HCT116 (cell line): ENCODE measurements at regions of chr12 and their contacts with region 1.

Region 1: DNA sequence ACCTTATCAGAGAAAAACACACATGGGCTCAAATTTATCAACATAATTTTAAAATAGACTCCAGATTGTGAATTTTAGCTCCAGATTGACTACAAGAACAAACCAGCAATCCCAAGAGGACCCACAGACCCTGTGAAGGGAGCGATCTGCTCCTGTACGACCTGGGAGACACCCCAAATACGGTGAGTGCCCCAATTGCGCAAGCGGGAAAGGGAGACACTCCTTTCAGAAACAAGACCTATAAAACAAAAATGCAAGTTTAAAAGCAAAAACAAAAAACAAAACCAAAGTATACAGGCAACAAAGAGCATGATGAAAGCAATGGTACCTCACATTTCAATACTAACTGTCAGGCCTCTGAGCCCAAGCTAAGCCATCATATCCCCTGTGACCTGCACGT is 32.1 kb downstream of the DNAI7 start:
- DNase-seq: no peak
- ATAC-seq: no peak
- H3K4me3 ChIP-seq: no peak overlapping the region
- H3K27ac ChIP-seq: no peak overlapping the region
- H3K4me1 ChIP-seq: no peaks in the 10 kb centered on the region
- H3K27me3 ChIP-seq: no peaks in the 10 kb centered on the region
- CTCF ChIP-seq: no peak
- POLR2A ChIP-seq: no peak
- RAD21 ChIP-seq: no peak

Region 2: GRCh38 chr12:25200703-25201102 is 37.8 kb after region 1 on chr12:
- CTCF ChIA-PET with region 1: no interaction called
- POLR2A ChIA-PET with region 1: no interaction called
- RAD21 ChIA-PET with region 1: no interaction called
- intact Hi-C with region 1: no loop called
- DNase-seq: no peak
- ATAC-seq: no peak
- H3K4me3 ChIP-seq: no peak overlapping the region
- H3K27ac ChIP-seq: no peak overlapping the region
- H3K4me1 ChIP-seq: peaks cover 3 to 5% of the 10 kb centered on the region in 2 experiments; a peak in 2 of 4 replicates
- H3K27me3 ChIP-seq: no peaks in the 10 kb centered on the region
- CTCF ChIP-seq: no peak
- POLR2A ChIP-seq: no peak
- RAD21 ChIP-seq: no peak

Region 3: DNA sequence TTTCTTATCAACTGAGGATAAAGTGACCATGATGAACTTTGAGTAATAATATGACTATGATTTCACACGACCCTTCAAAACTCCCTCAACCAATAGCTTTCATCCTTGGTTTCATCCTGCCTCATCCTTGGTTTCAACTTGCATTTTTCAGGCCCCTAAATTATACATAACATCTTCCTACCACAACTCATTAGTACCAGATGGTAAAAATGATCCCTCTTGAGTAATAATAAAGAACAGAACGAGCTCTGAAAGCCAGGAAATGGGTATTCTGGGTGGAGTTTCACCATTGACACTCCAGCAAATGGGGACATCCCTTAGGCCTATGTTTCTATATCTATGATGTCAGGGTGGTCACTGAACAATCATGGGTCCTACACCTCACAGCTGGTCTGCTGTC is 462.3 kb after region 1 on chr12:
- CTCF ChIA-PET with region 1: no interaction called
- POLR2A ChIA-PET with region 1: no interaction called
- RAD21 ChIA-PET with region 1: no interaction called
- intact Hi-C with region 1: loop called (anchors 5 kb)
- DNase-seq: no peak
- ATAC-seq: no peak
- H3K4me3 ChIP-seq: no peak overlapping the region
- H3K27ac ChIP-seq: no peak overlapping the region
- H3K4me1 ChIP-seq: no peaks in the 10 kb centered on the region
- H3K27me3 ChIP-seq: no peaks in the 10 kb centered on the region
- CTCF ChIP-seq: no peak
- POLR2A ChIP-seq: no peak
- RAD21 ChIP-seq: no peak